ENCODE measurements at regions of chr12 and their contacts with region 1.

Region 1: GRCh38 chr12:94297876-94298505 is 149.6 kb downstream of the PLXNC1 start:
- DNase-seq: no peak
- ATAC-seq: no peak
- H3K4me3 Mint-ChIP-seq: peak overlapping the region; percentile 42
- H3K27ac Mint-ChIP-seq: peak overlapping the region; percentile 79
- H3K4me1 Mint-ChIP-seq: peaks cover 56% of the 10 kb centered on the region
- H3K27me3 Mint-ChIP-seq: no peaks in the 10 kb centered on the region
- CTCF ChIP-seq: no peak

Region 2: DNA sequence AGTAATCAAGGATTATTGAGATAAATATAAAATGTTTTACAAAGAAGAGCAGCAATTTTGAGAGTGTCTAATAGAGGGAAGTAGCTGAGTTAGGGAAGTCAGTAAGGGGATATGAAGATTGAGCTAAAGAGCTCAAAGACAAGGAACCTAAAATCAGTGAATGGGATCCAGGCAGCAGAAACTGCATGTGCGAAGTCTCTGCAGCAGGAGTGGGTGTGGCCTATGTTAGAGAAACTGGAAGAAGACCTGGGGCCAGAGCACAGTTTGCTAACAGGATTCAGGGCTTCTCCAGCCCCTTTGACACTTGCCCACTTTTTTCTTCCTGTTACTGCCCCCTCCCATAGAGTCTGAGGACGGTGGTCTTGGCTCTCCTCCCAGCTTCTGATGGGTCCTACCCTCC is 185.9 kb before region 1 on chr12:
- CTCF ChIA-PET with region 1: no interaction called
- POLR2A ChIA-PET with region 1: no interaction called
- intact Hi-C with region 1: no loop called
- DNase-seq: no peak
- ATAC-seq: no peak
- H3K4me3 Mint-ChIP-seq: no peak overlapping the region
- H3K27ac Mint-ChIP-seq: no peak overlapping the region
- H3K4me1 Mint-ChIP-seq: no peaks in the 10 kb centered on the region
- H3K27me3 Mint-ChIP-seq: no peaks in the 10 kb centered on the region
- CTCF ChIP-seq: no peak

Region 3: DNA sequence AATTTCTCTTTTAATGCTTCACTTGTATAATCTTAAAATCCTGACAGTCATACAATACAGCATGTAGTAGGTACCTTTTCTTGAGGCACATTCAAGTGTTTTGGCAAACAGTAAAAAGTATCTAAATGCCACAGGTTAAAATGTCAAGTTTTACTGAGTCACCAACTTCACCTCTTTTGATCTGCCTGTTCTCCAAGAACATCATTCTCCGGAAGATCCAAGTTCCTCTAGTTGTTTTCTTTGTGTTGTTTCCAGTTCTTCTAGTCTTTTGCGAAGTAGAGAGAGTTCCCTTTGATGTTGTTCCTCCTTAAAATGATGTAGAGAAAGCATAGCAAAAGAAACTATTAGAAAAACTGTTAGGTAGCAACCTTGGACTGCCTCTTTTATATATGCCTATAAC is 10.6 kb after region 1 on chr12:
- CTCF ChIA-PET with region 1: no interaction called
- POLR2A ChIA-PET with region 1: interaction called, 4 read pairs
- intact Hi-C with region 1: loop called (anchors 1 kb)
- DNase-seq: no peak
- ATAC-seq: no peak
- H3K4me3 Mint-ChIP-seq: no peak overlapping the region
- H3K27ac Mint-ChIP-seq: peak overlapping the region; percentile 54
- H3K4me1 Mint-ChIP-seq: peaks cover 30% of the 10 kb centered on the region
- H3K27me3 Mint-ChIP-seq: no peaks in the 10 kb centered on the region
- CTCF ChIP-seq: no peak

Region 4: GRCh38 chr12:94318181-94318580 is 20.2 kb after region 1 on chr12:
- CTCF ChIA-PET with region 1: no interaction called
- POLR2A ChIA-PET with region 1: interaction called, 5 read pairs
- intact Hi-C with region 1: loop called (anchors 1 kb)
- DNase-seq: no peak
- ATAC-seq: peak; percentile 94
- H3K4me3 Mint-ChIP-seq: peak overlapping the region; percentile 59
- H3K27ac Mint-ChIP-seq: peak overlapping the region; percentile 59
- H3K4me1 Mint-ChIP-seq: peaks cover 26% of the 10 kb centered on the region
- H3K27me3 Mint-ChIP-seq: no peaks in the 10 kb centered on the region
- CTCF ChIP-seq: no peak

Region 5: DNA sequence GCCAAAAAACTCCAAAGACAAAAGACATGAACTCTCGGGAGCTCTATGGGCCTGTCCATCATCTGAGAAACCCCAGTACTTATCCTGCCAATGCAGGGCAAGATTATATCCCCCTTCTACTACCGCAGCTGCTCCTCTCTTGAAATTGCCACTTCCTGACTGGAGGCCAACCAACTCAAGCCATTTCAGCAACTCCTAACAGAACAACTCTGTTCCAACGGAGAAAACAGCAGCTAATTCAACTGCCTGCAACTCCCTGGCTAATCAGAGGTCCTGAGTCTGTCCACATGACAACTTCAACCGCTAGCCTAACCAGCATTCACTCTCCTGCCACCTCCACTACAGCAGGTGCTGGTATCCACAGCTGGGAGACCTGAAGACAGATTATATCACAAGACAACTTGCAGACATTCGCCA is 137.5 kb after region 1 on chr12:
- CTCF ChIA-PET with region 1: no interaction called
- POLR2A ChIA-PET with region 1: no interaction called
- intact Hi-C with region 1: no loop called
- DNase-seq: no peak
- ATAC-seq: no peak
- H3K4me3 Mint-ChIP-seq: no peak overlapping the region
- H3K27ac Mint-ChIP-seq: no peak overlapping the region
- H3K4me1 Mint-ChIP-seq: peaks cover 12% of the 10 kb centered on the region
- H3K27me3 Mint-ChIP-seq: no peaks in the 10 kb centered on the region
- CTCF ChIP-seq: no peak